Pancreas (tissue), 10 donors: ENCODE measurements at regions of chr4 and their contacts with region 1.

Region 1: DNA sequence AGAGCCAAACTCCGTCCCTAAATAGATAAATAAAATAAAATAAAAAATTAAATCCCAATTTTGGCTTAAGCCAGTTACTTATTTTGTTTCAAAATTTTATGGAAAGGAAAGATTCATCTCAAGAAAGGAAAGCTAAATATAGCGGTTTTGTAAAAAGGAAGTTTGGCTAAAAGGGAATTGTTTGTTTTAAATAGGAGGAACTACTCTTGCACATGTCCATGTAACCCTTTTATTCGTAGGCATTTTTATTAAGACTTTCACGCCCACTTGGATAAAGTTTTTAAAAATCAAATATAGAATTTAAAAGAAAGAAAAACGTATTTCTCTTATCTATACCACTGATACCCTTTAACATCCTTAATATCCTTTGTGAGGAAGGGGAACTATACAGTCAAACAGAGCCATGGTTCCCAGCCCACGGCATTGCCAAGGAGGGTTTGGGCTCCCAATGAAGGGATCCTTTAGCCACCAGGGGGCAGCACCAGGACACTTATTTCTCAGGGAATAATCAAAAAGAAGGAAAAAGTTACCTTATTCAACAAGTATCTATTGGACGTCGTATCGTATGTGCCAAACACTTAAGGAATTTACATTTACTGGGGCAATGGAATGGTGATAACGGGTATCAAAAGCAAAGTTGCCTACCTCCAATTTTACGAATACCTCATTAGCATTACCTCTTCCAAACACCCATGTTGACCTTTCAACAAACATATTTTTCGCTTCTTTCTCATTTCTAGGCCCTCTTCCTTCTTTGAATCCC is 27.7 kb downstream of the CDKN2AIP start:
- DNase-seq: peak; percentile 75 to 95 (median 88)
- ATAC-seq: peak; percentile 94 to 99 (median 98)
- H3K4me3 ChIP-seq: no peak overlapping the region
- H3K27ac ChIP-seq: no peak overlapping the region
- H3K4me1 ChIP-seq: peaks cover 0 to 4% (median 0%) of the 10 kb centered on the region in 3 donors
- H3K27me3 ChIP-seq: no peaks in the 10 kb centered on the region
- CTCF ChIP-seq: peak; percentile 75 to 92 (median 84)

Region 2: DNA sequence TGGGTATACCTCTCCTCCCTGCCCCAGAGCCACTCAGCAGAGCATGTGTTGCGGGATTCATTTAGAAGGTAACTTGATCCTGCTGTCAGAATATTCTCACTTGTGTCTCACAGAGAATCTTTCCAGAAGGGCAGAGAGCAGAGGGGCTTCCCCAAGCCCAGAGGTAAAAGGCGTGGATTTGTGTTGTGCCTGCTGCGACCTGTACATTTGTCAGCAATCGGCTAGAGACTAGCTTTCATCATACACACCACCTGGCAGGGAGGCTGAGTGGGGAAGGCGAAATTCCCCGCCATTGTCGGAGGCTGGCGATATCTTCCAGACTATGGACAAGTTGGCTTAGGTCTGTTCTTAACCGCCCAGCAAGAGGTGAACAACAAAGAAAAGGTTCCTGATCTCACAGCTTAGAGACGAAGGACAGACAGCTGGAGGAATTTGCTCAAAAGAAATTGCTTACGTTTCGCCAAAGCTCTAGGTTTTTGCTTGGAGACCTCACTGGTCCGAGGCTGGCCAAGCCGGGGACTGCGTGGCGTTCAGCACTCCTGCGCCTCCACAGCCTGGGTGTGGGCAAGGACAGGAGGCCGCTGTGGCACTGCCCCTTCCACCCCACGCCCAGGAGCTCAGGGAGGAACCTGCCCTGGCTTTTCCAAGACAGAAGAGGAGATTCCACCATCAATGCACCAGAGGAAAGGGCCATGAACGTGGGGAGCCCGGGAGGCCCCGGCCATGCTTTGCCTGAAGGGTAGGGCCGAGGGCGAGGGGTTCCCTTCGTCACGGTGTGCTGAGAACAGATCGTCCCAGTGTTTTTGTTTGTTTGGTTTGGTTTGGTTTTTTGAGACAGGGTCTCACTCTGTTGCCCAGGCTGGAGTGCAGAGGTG is 624.3 kb before region 1 on chr4:
- intact Hi-C with region 1: no loop called
- DNase-seq: no peak
- ATAC-seq: no peak
- H3K4me3 ChIP-seq: no peak overlapping the region
- H3K27ac ChIP-seq: no peak overlapping the region
- H3K4me1 ChIP-seq: no peaks in the 10 kb centered on the region
- H3K27me3 ChIP-seq: no peaks in the 10 kb centered on the region
- CTCF ChIP-seq: no peak

Region 3: DNA sequence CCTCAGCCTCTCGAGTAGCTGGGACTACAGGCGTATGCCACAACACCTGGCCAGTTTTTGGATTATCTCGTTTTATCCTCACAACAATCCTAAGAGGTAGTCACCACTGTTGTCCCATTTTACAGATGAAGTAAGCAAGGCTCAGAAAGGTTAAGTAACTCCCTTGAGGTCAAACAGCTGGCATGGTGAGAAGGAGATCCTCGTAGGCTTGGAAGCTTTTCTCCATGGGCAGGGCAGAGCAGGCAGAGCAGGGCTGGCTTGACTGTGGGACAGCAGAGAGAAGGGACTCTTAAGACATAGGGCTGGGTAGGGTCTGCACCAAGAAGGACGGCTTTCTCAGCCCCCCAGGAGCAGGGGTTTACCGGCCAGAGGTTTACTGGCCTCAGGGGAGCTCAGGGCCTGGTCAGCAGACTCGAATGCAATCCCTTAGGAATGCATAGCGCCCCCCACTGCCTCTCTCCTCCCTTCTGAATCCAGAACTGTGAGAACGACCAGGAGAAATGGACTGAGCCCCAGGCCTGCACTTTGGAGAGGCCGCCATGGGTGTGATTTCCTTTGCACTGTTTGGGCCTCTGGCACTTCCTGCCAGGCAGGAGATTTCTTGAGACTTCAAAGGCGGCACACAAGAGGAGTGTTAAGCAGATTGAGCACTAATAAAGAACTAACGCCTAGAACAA is 41.7 kb before region 1 on chr4:
- intact Hi-C with region 1: no loop called
- DNase-seq: peak in 1 of 6 donors; percentile 8
- ATAC-seq: peak in 1 of 4 donors; percentile 38
- H3K4me3 ChIP-seq: no peak overlapping the region
- H3K27ac ChIP-seq: no peak overlapping the region
- H3K4me1 ChIP-seq: no peaks in the 10 kb centered on the region
- H3K27me3 ChIP-seq: no peaks in the 10 kb centered on the region
- CTCF ChIP-seq: no peak

Region 4: DNA sequence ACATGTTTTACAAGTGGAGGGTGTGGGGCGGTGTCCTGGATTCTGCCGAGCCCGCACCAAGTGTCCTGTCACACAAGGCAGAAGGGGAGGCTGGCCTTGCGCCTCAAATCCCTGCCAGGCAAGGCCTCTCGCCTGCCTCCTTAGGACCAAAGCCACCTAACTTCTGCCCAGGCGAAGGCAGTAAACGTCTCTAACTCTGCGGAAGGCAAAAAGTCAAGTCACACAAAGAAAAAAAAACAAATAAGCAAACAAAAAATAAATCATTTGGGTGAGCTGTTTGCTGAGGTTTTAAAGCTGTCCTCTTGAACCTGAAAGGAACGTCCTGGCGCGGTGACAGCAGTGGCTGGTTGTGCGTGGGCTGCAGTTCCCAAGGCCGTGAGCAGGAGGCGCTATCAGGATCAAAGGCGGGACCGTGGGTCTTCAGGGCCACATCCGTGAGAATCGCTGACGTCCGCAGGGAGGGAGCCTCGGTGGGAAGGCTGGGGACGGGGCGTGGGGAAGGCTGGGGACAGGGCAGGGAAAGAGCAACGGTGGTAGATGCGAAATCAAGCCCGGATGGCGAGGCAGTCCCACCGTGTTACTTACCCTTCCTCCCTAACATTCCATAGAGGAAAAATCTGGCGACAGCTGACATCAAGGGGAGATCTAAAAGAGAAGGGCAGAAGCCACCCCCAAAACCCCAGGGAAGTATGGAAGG is 286.1 kb after region 1 on chr4:
- intact Hi-C with region 1: no loop called
- DNase-seq: peak in 1 of 6 donors; percentile 39
- ATAC-seq: no peak
- H3K4me3 ChIP-seq: no peak overlapping the region
- H3K27ac ChIP-seq: no peak overlapping the region
- H3K4me1 ChIP-seq: no peaks in the 10 kb centered on the region
- H3K27me3 ChIP-seq: no peaks in the 10 kb centered on the region
- CTCF ChIP-seq: no peak

Region 5: DNA sequence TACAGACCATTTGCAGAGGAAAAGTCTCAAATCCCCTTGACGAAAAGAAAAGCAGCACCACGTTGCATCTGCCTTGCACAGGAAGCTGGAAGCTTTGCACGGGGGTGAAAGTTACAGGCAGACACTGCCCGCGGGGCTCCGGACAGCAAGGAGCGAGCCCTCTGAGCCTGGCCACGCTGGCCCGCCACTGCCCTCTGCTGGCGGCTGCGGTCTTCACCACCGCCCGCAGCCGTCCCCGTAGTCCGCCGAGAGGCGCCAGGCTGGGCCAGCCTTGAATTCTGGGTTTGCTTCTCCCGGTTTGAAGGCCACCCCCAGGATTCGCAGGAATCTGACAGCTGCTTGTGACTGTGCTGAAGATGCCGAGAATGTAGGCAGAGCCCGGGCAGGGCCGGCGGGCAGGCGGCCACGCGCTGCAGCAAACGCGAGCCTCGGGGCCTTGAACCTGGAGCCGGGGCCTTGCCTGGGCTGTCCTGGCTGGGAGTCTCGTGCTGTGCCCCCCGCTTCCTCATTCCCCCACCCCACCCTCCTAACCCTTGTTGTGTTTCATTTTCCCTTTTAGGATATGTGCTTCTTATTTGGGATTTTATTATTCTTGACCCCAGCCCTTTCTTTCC is 696.4 kb after region 1 on chr4:
- intact Hi-C with region 1: loop called in 2 of 3 experiments (anchors 5 to 10 kb)
- DNase-seq: peak; percentile 47 to 94 (median 80)
- ATAC-seq: peak; percentile 96 to 99 (median 98)
- H3K4me3 ChIP-seq: no peak overlapping the region
- H3K27ac ChIP-seq: no peak overlapping the region
- H3K4me1 ChIP-seq: no peaks in the 10 kb centered on the region
- H3K27me3 ChIP-seq: no peaks in the 10 kb centered on the region
- CTCF ChIP-seq: peak; percentile 86 to 97 (median 95)